ENCODE measurements at regions of chr7 and their contacts with region 1.

Region 1: DNA sequence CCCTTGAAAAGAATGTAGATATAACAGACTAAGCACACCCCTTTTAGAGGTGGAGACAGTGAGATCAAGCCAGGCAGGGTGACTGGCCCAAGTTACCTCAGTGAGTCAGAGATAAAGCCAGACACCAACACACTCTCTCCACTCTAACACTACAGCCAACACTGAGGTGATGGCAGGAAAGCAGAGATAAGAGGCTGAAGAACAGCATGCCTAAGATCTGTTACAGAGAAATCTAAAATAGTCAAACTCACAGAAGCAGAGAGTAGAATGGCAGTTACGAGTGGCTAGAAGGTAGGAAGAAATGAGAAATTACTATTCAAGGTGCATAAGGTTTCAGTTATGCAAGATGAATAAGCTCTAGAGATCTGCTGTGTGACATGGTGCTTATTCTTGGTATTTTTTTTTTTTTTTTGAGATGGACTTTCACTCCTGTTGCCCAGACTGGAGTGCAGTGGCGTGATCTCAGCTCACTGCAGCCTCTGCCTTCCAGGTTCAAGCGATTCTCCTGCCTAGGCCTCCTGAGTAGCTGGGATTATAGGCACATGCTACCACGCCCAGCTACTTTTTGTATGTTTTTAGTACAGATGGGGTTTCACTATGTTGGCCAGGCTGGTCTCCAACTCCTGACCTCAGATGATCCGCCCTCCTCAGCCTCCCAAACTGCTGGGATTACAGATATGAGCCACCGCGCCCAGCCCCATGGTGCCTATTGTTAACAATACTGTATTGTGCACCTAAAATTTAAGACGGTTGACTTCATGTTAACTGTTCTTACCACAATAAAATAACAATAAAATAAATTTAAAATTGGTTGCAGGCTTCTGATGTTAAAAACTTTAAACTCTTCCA is 28.7 kb downstream of the ICA1 start:
- DNase-seq: no peak
- H3K4me3 ChIP-seq: no peak overlapping the region
- H3K27ac ChIP-seq: peak overlapping the region in 1 of 2 experiments; percentile 100; a peak in 2 of 4 replicates
- H3K4me1 ChIP-seq: peaks cover 0 to 60% of the 10 kb centered on the region in 2 experiments; a peak in 2 of 4 replicates
- H3K27me3 ChIP-seq: no peaks in the 10 kb centered on the region
- CTCF ChIP-seq: no peak
- EP300 ChIP-seq: peak in 1 of 2 experiments; percentile 52; a peak in 1 of 4 replicates
- RAD21 ChIP-seq: no peak

Region 2: GRCh38 chr7:8254667-8255066 is 21.4 kb after region 1 on chr7:
- CTCF ChIA-PET with region 1: interaction called, 26 read pairs
- POLR2A ChIA-PET with region 1: interaction called, 229 read pairs
- DNase-seq: no peak
- H3K4me3 ChIP-seq: no peak overlapping the region
- H3K27ac ChIP-seq: peak overlapping the region in 1 of 2 experiments; percentile 81; a peak in 2 of 4 replicates
- H3K4me1 ChIP-seq: peaks cover 0 to 38% of the 10 kb centered on the region in 2 experiments; a peak in 2 of 4 replicates
- H3K27me3 ChIP-seq: no peaks in the 10 kb centered on the region
- CTCF ChIP-seq: no peak
- EP300 ChIP-seq: no peak
- RAD21 ChIP-seq: no peak